ENCODE measurements at regions of chr10 and their contacts with region 1.

Region 1: GRCh38 chr10:92240289-92241157 is 50.4 kb downstream of the CPEB3 start:
- DNase-seq: peak in 4 of 5 donors; percentile 59 to 72 (median 68)
- ATAC-seq: peak; percentile 72 to 82 (median 77)
- H3K4me3 ChIP-seq: peak overlapping the region; percentile 49 to 82 (median 75)
- H3K27ac ChIP-seq: peak overlapping the region; percentile 62 to 91 (median 88)
- H3K4me1 ChIP-seq: peaks cover 0 to 58% (median 25%) of the 10 kb centered on the region in 12 donors
- H3K27me3 ChIP-seq: no peaks in the 10 kb centered on the region
- CTCF ChIP-seq: no peak
- POLR2A ChIP-seq: peak in 1 of 2 donors; percentile 54

Region 2: DNA sequence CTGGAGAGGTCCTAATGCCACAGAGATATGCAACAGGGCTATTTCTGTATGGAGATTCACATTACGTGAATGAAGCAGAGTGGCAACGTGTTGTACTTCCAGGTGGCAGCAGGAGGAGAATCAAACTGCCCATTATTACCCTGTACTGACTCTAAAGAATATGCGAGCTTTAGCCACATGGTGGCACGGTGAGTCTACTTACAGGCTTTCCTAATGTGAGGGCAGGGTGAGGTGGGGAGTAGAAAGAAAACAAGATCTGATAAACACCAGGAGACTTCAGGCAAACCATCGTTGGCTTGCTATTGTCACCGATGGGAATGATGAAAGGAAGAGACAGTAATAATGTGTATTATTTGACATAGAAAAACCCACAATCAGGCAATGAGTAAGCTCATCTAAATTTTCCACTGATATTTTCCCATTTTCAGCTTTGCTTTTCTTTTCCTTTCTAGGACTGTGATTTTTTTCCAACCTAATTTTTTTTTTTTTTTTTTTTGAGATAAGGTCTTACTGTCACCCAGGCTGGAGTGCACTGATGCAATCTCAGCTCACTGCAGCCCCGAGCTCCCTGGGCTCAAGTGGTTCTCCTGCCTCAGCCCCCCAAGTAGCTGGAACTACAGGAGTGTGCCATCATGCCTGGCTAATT is 152.7 kb before region 1 on chr10:
- intact Hi-C with region 1: loop called in 6 of 10 experiments (anchors 2 to 10 kb)
- DNase-seq: peak in 4 of 5 donors; percentile 57 to 71 (median 66)
- ATAC-seq: peak; percentile 93 to 94 (median 94)
- H3K4me3 ChIP-seq: no peak overlapping the region
- H3K27ac ChIP-seq: peak overlapping the region in 6 of 12 donors; percentile 19 to 49 (median 36)
- H3K4me1 ChIP-seq: peaks cover 0 to 38% (median 12%) of the 10 kb centered on the region in 12 donors
- H3K27me3 ChIP-seq: no peaks in the 10 kb centered on the region
- CTCF ChIP-seq: peak; percentile 58 to 87 (median 76)
- POLR2A ChIP-seq: no peak

Region 3: DNA sequence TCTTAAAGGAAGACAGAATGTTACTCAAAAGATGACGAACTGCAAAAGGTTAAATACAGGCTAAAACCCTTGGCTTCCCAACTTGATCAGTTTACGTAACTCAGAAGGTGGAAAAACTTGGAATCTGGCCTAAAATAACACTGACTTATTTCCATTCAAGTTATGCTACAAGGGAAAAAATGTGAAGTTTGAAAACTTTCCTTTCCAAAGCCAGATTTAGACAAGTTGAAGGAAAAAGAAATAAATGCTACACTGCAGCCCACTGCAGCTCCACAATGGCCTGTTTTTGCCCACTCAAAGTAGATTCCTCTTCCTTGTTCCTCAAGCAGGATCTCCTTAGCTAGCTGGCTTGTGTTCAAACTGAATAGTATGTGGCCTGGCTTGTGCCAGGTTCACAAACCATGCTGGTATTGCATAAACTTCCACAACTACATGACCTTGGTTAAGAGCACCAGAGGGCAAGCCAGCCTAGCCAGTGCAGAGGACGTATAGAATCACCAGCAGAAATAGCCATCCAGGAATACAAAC is 115.8 kb before region 1 on chr10:
- intact Hi-C with region 1: loop called in 1 of 10 experiments (anchors 10 kb)
- DNase-seq: peak in 2 of 5 donors; percentile 41 to 50
- ATAC-seq: peak; percentile 35 to 79 (median 68)
- H3K4me3 ChIP-seq: no peak overlapping the region
- H3K27ac ChIP-seq: peak overlapping the region; percentile 25 to 84 (median 76)
- H3K4me1 ChIP-seq: peaks cover 20 to 61% (median 50%) of the 10 kb centered on the region in 12 donors
- H3K27me3 ChIP-seq: no peaks in the 10 kb centered on the region
- CTCF ChIP-seq: no peak
- POLR2A ChIP-seq: no peak

Region 4: DNA sequence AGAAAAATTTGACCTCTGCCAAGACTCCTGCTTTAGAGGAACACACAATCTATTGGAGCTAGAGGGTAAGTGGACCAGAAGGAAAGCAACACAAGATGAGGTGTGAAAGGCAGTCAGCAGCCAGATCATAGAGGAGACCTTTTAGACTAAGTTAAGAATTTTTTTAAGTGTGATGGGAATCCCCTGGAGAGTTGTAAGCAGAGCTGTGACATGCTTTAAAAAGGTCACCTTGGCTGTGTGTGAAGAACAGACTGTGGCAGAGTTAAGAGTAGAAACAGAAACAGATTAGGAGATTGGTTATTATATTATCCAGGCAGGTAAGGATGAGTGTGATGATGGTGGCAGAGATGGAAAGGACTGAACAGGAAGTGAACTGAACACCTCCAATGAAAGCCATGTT is 26.8 kb after region 1 on chr10:
- intact Hi-C with region 1: no loop called
- DNase-seq: no peak
- ATAC-seq: peak in 3 of 4 donors; percentile 42 to 51 (median 50)
- H3K4me3 ChIP-seq: no peak overlapping the region
- H3K27ac ChIP-seq: peak overlapping the region in 3 of 12 donors; percentile 3 to 10 (median 7)
- H3K4me1 ChIP-seq: peaks cover 0 to 13% (median 2%) of the 10 kb centered on the region in 12 donors
- H3K27me3 ChIP-seq: no peaks in the 10 kb centered on the region
- CTCF ChIP-seq: no peak
- POLR2A ChIP-seq: no peak

Region 5: GRCh38 chr10:92290837-92291615 is 50.5 kb after region 1 on chr10 and contains the starts of genes CPEB3 and MARCHF5:
- intact Hi-C with region 1: loop called (anchors 1 to 5 kb)
- DNase-seq: peak; percentile 97 to 98 (median 98)
- ATAC-seq: peak; percentile 99 to 100 (median 99)
- H3K4me3 ChIP-seq: peak within 1 kb of the TSS; percentile 68 to 99 (median 93)
- H3K27ac ChIP-seq: peak within 1 kb of the TSS; percentile 83 to 99 (median 96)
- H3K4me1 ChIP-seq: peaks cover 0 to 29% (median 14%) of the 10 kb centered on the region in 12 donors
- H3K27me3 ChIP-seq: no peaks in the 10 kb centered on the region
- CTCF ChIP-seq: peak; percentile 48 to 75 (median 62)
- POLR2A ChIP-seq: peak in 1 of 2 donors; percentile 79
- total RNA-seq, gene CPEB3: 6.2 to 17.2 (median 10.1) TPM
- total RNA-seq, gene MARCHF5: 14.8 to 55.7 (median 29.4) TPM